ENCODE measurements at regions of chr1 and their contacts with region 1.

Region 1: DNA sequence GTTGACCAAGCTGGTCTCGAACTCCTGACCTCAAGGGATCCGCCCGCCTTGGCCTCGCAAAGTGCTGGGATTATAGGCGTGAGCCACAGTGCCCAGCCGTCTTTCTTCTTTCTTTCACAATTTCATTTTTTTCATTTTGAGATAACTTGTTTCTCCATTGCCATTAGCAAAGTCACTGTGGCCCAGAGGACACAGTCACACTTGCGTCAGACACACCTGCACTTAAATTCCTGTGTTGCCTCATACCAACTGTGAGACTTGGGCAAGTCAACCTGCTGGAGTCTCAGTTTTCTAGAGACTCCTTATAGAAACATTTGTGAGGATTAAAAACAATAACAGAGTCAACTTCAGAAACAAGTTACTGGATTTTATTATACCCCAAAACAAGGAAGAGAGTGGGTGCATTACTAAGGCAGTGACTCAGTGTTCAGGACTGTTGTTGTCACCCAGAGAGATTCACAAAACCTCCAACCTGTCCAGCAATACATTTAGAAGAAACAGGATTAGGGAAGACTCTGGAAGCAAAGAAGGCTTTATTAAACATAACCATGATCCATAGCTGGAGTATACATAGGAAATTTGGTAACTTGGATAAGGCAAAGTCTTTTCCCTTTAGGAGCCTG is 2.6 kb downstream of the TEDDM1 start:
- DNase-seq: no peak
- ATAC-seq: no peak
- H3K4me3 ChIP-seq: no peak overlapping the region
- H3K27ac ChIP-seq: no peak overlapping the region
- H3K4me1 ChIP-seq: no peaks in the 10 kb centered on the region
- H3K27me3 ChIP-seq: no peaks in the 10 kb centered on the region
- CTCF ChIP-seq: no peak
- EP300 ChIP-seq: no peak
- POLR2A ChIP-seq: no peak
- RAD21 ChIP-seq: no peak

Region 2: DNA sequence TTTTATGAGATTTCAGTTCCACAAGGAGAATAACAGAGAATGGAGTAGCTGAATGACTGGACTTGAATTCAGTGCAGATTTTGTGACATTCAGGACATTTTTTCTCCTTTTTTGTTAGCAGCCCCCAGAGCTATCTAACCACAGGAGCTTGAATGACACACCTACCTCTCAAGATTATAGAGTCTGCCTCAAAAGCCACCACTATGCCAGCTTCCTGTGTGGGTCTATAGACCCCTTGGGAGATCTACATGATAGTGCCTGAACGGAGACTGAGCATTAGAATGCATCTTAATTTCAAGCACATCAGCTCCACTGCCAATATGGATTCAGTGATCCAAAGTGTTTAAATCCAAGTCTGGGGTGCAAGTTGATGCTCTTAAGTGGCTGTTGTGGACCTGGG is 261.9 kb before region 1 on chr1:
- CTCF ChIA-PET with region 1: interaction called, 418 read pairs
- POLR2A ChIA-PET with region 1: interaction called, 4 read pairs
- RAD21 ChIA-PET with region 1: interaction called, 282 read pairs
- SMC1A ChIA-PET with region 1: interaction called, 303 read pairs
- in situ Hi-C with region 1: loop called (anchors 5 kb)
- intact Hi-C with region 1: no loop called
- DNase-seq: no peak
- ATAC-seq: no peak
- H3K4me3 ChIP-seq: no peak overlapping the region
- H3K27ac ChIP-seq: no peak overlapping the region
- H3K4me1 ChIP-seq: no peaks in the 10 kb centered on the region
- H3K27me3 ChIP-seq: no peaks in the 10 kb centered on the region
- CTCF ChIP-seq: no peak
- EP300 ChIP-seq: no peak
- POLR2A ChIP-seq: no peak
- RAD21 ChIP-seq: no peak

Region 3: DNA sequence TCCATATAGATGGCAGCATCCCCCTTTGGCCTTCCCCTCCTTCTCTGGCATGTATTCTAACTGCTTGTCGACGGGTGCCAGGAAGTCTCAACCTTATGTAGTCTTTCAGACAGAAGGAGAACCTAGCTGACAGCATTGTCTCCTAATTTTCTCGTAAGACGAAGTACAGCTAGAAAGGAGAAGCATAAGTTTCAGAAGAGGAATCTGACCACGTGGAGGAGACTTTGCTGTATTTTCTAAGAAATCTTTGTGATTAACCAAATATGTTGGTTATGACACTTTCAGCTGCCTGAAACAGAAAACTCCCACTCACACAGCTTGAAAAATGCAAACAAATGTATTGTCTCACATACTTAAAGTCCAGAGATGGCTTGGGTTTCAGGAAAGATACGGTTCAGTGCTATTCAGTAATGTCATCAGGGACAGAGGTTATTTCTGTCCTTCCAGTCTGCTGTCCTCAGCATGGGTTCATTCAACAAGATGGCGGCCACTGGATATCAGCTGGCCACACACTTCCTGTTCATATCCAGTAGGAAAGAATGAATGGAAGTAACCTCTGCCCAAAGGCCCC is 226.9 kb before region 1 on chr1:
- CTCF ChIA-PET with region 1: interaction called, 10 read pairs
- POLR2A ChIA-PET with region 1: no interaction called
- RAD21 ChIA-PET with region 1: interaction called, 4 read pairs
- SMC1A ChIA-PET with region 1: no interaction called
- in situ Hi-C with region 1: no loop called
- intact Hi-C with region 1: no loop called
- DNase-seq: no peak
- ATAC-seq: peak; percentile 68
- H3K4me3 ChIP-seq: no peak overlapping the region
- H3K27ac ChIP-seq: no peak overlapping the region
- H3K4me1 ChIP-seq: no peaks in the 10 kb centered on the region; the same call in 1 of the 2 replicates
- H3K27me3 ChIP-seq: no peaks in the 10 kb centered on the region
- CTCF ChIP-seq: no peak
- EP300 ChIP-seq: peak; percentile 33 to 45; a peak in 1 of 4 replicates
- POLR2A ChIP-seq: no peak
- RAD21 ChIP-seq: no peak

Region 4: GRCh38 chr1:182301467-182302198 is 96.2 kb before region 1 on chr1:
- CTCF ChIA-PET with region 1: interaction called, 5 read pairs
- POLR2A ChIA-PET with region 1: no interaction called
- RAD21 ChIA-PET with region 1: no interaction called
- SMC1A ChIA-PET with region 1: interaction called, 8 read pairs
- in situ Hi-C with region 1: no loop called
- intact Hi-C with region 1: loop called (anchors 5 kb)
- DNase-seq: no peak
- ATAC-seq: peak; percentile 66
- H3K4me3 ChIP-seq: no peak overlapping the region
- H3K27ac ChIP-seq: no peak overlapping the region
- H3K4me1 ChIP-seq: peaks cover 12% of the 10 kb centered on the region
- H3K27me3 ChIP-seq: no peaks in the 10 kb centered on the region
- CTCF ChIP-seq: peak in 1 of 3 experiments; percentile 30; a peak in 1 of 6 replicates
- EP300 ChIP-seq: no peak
- POLR2A ChIP-seq: no peak
- RAD21 ChIP-seq: peak; percentile 45; the same call in 1 of the 2 replicates

Region 5: DNA sequence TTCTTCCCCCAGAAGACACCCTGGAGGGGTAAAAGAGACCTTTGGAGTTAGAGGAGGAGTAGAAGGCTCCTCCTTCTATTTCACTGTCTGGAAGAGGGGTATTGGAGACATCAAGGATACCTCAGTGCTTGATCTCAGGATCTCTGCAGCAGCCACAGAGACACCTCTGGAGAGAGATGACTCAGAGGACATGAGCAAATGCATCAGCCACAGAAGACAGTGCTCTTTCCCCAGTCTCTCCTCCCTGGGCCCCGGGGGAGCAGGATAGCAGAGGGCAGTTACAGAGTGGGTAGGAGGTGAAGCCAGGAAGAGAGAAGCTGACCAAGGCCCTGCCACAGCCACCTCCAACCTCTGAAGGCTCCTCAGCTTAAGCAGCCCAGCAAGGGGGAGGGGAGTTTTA is 17.9 kb after region 1 on chr1:
- CTCF ChIA-PET with region 1: interaction called, 11 read pairs
- POLR2A ChIA-PET with region 1: no interaction called
- RAD21 ChIA-PET with region 1: interaction called, 3 read pairs
- SMC1A ChIA-PET with region 1: interaction called, 4 read pairs
- in situ Hi-C with region 1: no loop called
- intact Hi-C with region 1: no loop called
- DNase-seq: no peak
- ATAC-seq: peak; percentile 24; the same call in 2 of the 3 replicates
- H3K4me3 ChIP-seq: no peak overlapping the region
- H3K27ac ChIP-seq: no peak overlapping the region
- H3K4me1 ChIP-seq: peaks cover 4% of the 10 kb centered on the region; the same call in 1 of the 2 replicates
- H3K27me3 ChIP-seq: no peaks in the 10 kb centered on the region
- CTCF ChIP-seq: no peak
- EP300 ChIP-seq: no peak
- POLR2A ChIP-seq: no peak
- RAD21 ChIP-seq: no peak

Measured in GM12878 (cell line).